B cell (primary cell): ENCODE measurements at regions of chr17 and their contacts with region 1.

Region 1: DNA sequence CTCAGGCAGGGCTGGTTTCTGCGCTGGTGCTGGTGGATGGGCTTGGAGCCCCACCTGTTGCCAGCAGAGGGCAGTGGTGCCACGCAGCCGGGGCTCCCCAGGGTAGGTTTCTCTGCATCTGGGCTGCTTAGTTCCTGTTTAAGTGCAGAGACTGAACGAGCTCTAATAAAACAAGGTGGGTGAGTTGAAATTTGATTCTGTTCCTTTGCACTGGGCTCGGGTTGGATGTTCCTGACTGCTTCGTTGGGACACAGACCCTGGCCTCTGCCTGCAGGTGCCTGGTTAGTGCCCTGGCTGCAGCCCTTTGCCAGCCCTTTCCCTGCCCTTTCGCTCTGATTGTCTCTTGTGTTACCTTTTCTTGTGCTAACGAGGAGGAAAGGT is 30.0 kb downstream of the TBCD start:
- DNase-seq: peak; percentile 90
- ATAC-seq: peak; percentile 100
- H3K4me3 ChIP-seq: no peak overlapping the region
- H3K4me3 Mint-ChIP-seq: no peak overlapping the region
- H3K27ac ChIP-seq: no peak overlapping the region
- H3K27ac Mint-ChIP-seq: no peak overlapping the region
- H3K4me1 ChIP-seq: peaks cover 3 to 13% of the 10 kb centered on the region in 2 donors
- H3K4me1 Mint-ChIP-seq: peaks cover 7% of the 10 kb centered on the region
- H3K27me3 ChIP-seq: no peaks in the 10 kb centered on the region
- H3K27me3 Mint-ChIP-seq: no peaks in the 10 kb centered on the region
- CTCF ChIP-seq: peak; percentile 99

Region 2: GRCh38 chr17:82816358-82817149 is 34.7 kb after region 1 on chr17:
- CTCF ChIA-PET with region 1: interaction called, 22 read pairs
- POLR2A ChIA-PET with region 1: no interaction called
- intact Hi-C with region 1: no loop called
- DNase-seq: no peak
- ATAC-seq: no peak
- H3K4me3 ChIP-seq: no peak overlapping the region
- H3K4me3 Mint-ChIP-seq: no peak overlapping the region
- H3K27ac ChIP-seq: no peak overlapping the region
- H3K27ac Mint-ChIP-seq: peak overlapping the region; percentile 20
- H3K4me1 ChIP-seq: peaks cover 24 to 34% of the 10 kb centered on the region in 2 donors
- H3K4me1 Mint-ChIP-seq: peaks cover 34% of the 10 kb centered on the region
- H3K27me3 ChIP-seq: no peaks in the 10 kb centered on the region
- H3K27me3 Mint-ChIP-seq: no peaks in the 10 kb centered on the region
- CTCF ChIP-seq: no peak

Region 3: DNA sequence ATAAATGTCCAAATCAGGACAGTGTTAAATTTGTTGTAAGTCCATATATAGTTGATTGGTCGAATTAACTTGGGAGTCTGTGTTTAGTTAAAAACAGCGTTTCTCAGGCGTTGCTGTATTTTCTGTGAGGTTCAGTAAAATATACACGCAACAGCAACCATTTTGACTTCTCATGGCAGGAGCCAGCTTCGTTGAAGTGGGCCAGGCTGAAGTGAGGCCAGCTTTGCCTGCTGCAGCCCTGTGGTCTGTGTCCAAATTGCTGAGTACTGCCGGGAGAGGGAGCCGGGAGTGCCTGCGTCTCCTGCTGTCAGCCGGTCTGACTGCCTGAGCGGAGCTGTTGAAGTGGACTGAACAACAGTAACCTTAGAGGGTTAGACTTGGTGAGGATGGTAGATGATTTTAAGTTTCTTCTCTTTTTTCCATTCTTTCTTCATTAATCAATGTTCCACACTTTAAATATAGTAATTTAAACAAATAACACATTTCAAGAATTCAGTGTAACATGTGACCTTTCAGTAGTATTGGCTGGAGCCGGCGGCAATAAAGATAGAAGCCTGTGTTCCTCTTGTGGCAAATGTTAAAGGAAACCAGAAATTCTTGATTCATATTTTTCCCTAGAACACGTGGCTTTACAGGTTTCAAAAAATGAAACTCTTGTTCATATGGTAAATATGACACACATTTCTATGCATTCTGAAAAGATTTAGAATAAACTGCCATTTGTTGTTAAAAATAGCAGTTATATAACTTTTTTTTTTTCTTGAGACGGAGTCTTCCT is 94.9 kb after region 1 on chr17:
- CTCF ChIA-PET with region 1: interaction called, 43 read pairs
- POLR2A ChIA-PET with region 1: interaction called, 5 read pairs
- intact Hi-C with region 1: loop called (anchors 1 kb)
- DNase-seq: no peak
- ATAC-seq: no peak
- H3K4me3 ChIP-seq: no peak overlapping the region
- H3K4me3 Mint-ChIP-seq: no peak overlapping the region
- H3K27ac ChIP-seq: no peak overlapping the region
- H3K27ac Mint-ChIP-seq: no peak overlapping the region
- H3K4me1 ChIP-seq: peaks cover 19 to 20% of the 10 kb centered on the region in 2 donors
- H3K4me1 Mint-ChIP-seq: peaks cover 25% of the 10 kb centered on the region
- H3K27me3 ChIP-seq: peaks cover 0 to 14% (median 0%) of the 10 kb centered on the region in 4 experiments
- H3K27me3 Mint-ChIP-seq: no peaks in the 10 kb centered on the region
- CTCF ChIP-seq: no peak

Region 4: DNA sequence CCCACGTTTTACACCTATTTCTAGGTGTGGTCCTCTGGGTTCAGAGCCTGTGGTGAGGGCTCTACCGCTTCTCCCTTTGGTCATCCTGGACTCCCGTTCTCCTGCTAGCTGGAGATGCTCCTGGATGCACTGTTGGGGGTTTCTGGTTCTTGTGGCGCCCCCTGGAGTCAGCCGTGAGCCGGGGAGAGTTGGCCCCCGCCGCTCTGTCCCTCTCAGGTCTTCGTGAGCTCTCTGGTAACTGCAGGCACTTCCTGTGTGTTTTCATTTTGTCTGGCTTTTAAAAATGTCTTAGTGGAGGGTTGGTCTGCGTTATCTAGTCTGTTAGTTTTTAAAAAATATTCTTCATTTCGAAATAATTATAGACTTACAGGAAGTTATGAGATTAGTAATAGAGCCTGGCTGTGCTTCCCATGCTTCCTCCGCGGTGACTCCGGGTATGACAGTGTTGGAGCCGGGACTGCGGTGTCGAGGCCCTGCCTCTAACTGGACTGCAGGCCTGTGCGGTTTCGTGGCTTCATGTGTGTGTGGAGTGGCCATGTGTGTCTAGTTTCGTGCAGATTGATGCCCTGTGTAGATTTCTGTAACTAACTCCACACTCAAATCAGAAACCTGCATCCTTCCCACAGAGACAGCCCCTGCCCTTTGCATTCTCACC is 135.9 kb after region 1 on chr17:
- CTCF ChIA-PET with region 1: interaction called, 68 read pairs
- POLR2A ChIA-PET with region 1: interaction called, 3 read pairs
- intact Hi-C with region 1: loop called (anchors 1 kb)
- DNase-seq: no peak
- ATAC-seq: no peak
- H3K4me3 ChIP-seq: no peak overlapping the region
- H3K4me3 Mint-ChIP-seq: no peak overlapping the region
- H3K27ac ChIP-seq: no peak overlapping the region
- H3K27ac Mint-ChIP-seq: no peak overlapping the region
- H3K4me1 ChIP-seq: peaks cover 23 to 24% of the 10 kb centered on the region in 2 donors
- H3K4me1 Mint-ChIP-seq: peaks cover 29% of the 10 kb centered on the region
- H3K27me3 ChIP-seq: no peaks in the 10 kb centered on the region
- H3K27me3 Mint-ChIP-seq: no peaks in the 10 kb centered on the region
- CTCF ChIP-seq: peak; percentile 10

Region 5: DNA sequence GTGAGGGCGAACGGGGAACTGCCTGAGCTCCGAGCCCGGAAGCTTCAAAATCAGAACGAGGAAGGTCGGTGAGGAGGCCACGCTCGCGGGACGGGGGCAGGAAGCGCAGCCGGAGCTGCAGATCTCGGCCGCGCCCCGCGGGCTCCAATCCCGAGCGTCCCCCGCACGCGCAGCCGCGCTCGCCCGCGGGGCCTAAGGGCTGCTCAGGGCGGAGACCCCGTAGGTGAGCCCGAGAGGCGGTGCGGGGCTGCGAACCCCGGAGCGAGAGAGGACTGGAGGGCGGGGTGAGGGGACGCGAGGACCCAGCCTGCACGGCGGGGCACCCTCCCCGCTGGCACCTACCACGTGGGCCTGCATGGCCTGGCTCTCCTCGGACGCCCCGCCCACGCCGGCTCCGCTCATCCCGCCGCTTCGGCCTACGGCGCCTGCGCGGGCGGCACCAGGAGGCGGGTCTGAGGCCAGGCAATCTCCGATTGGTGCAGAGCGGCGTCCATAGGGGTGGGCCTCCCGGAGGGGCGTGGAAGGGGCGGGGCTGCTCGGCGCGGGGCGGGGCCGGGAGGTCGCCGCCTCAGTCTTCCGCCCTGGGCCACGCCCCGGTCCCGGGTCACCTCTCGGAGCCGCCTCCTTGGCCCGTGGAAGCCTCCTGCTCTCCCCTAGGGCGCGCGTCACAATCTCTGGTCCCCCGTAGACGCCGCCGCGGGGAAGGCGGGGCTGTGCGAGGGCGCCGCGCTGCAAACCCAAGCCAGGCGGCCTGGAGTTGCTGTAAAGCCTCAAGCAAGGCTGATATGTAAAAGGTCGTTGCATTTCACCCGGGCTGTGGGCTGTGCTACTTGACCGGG is 269.7 kb after region 1 on chr17:
- CTCF ChIA-PET with region 1: interaction called, 6 read pairs
- POLR2A ChIA-PET with region 1: no interaction called
- intact Hi-C with region 1: loop called (anchors 5 kb)
- DNase-seq: peak; percentile 98
- ATAC-seq: peak; percentile 90
- H3K4me3 ChIP-seq: peak overlapping the region in 4 of 5 experiments; percentile 45 to 76 (median 62)
- H3K4me3 Mint-ChIP-seq: peak overlapping the region; percentile 88
- H3K27ac ChIP-seq: peak overlapping the region; percentile 68 to 69
- H3K27ac Mint-ChIP-seq: peak overlapping the region; percentile 91
- H3K4me1 ChIP-seq: peaks cover 11 to 29% of the 10 kb centered on the region in 2 donors
- H3K4me1 Mint-ChIP-seq: peaks cover 30% of the 10 kb centered on the region
- H3K27me3 ChIP-seq: no peaks in the 10 kb centered on the region
- H3K27me3 Mint-ChIP-seq: no peaks in the 10 kb centered on the region
- CTCF ChIP-seq: no peak